Heart left ventricle (tissue), 16 donors: ENCODE measurements at regions of chr12 and their contacts with region 1.

Region 1: GRCh38 chr12:122752464-122753318 is at the start of gene DENR:
- DNase-seq: peak; percentile 97 to 99 (median 98)
- ATAC-seq: peak; percentile 97 to 99 (median 98)
- H3K4me3 ChIP-seq: peak within 1 kb of the TSS; percentile 65 to 99 (median 87)
- H3K27ac ChIP-seq: peak within 1 kb of the TSS; percentile 37 to 95 (median 83)
- H3K4me1 ChIP-seq: peaks cover 0 to 19% (median 8%) of the 10 kb centered on the region in 12 donors
- H3K27me3 ChIP-seq: no peaks in the 10 kb centered on the region
- CTCF ChIP-seq: peak; percentile 60 to 96 (median 84)
- POLR2A ChIP-seq: peak in 1 of 2 donors; percentile 89
- total RNA-seq, gene DENR: 13.3 to 32.7 (median 26.3) TPM

Region 2: DNA sequence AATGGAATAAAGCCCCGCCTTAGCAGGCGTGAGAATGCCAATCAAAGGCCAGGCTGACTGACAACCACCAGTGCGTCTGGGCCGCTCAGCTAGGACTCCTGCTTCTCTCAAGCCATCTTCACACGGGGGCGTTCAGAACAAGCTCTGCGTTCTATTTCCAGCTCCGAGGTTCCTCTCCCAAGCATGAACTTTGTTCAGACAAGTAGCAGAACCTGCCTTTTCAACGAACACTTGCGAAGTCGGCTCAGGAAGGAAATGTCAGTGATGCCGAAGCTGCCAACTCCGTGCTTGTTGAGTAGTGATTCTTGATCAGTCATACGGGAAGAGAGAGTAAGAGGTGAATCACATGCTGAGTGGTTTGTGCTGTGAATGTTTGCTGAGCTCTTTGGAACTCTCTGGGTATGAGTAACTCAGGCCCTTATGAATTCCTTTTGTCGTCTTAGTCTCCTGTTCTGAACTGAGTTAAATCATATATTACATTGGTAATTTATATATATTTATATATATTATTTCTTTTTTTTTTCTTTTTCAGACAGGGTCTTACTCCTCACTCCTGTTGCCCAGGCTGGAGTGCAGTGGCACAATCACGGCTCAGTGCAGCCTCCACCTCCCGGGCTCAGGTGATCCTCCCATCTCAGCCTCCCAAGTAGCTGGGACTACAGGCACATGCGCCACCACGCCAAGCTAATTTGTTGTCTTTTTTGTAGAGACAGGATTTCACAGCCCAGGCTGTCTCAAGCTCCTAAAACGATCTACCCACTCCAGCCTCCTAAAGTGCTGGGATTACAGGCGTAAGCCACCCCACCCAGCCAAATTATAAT is 760.4 kb before region 1 on chr12:
- intact Hi-C with region 1: no loop called
- DNase-seq: peak in 2 of 5 donors; percentile 56 to 63
- ATAC-seq: peak in 3 of 4 donors; percentile 56 to 81 (median 79)
- H3K4me3 ChIP-seq: no peak overlapping the region
- H3K27ac ChIP-seq: peak overlapping the region in 9 of 12 donors; percentile 1 to 73 (median 47)
- H3K4me1 ChIP-seq: peaks cover 0 to 15% (median 0%) of the 10 kb centered on the region in 12 donors
- H3K27me3 ChIP-seq: no peaks in the 10 kb centered on the region
- CTCF ChIP-seq: no peak
- POLR2A ChIP-seq: no peak

Region 3: DNA sequence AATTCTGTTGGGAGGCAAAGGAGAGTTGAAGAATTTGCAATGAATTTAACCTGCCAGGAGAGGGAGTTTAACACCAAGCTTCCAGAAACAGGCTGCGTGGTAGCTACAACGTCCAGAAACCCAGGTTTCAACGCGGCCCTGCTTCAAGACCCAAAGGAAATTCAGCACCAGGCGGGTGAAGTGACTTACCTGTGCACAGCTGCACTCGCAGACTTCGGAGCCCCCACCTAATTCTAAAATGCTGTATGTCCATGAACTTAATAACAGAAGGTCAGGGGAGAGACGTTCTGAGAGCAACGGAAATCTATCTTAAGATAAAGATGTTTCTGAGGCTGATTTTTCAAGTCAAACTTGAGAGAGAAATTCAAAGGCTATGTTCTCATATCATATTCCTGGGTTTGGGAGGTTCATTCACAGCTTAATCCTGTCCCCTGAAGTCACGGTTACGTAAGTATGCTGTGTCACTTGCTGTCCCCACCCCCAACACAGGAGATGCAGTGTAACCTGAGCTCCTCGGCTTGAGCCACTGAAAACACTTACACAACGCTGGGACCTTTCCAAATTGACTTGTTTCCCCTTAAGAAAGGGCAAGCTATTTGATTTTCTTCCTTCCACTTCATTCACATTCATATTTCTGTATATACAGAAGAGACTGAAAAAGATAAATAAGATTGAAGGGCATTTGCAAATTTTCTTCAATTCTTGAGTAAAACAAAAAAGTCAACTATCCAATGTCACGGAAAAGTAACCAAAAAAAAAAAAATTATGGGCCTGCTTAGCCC is 352.9 kb before region 1 on chr12:
- intact Hi-C with region 1: loop called in 2 of 10 experiments (anchors 2 to 5 kb)
- DNase-seq: peak in 4 of 5 donors; percentile 61 to 75 (median 66)
- ATAC-seq: peak; percentile 84 to 92 (median 86)
- H3K4me3 ChIP-seq: peak overlapping the region in 9 of 12 donors; percentile 3 to 43 (median 25)
- H3K27ac ChIP-seq: peak overlapping the region; percentile 69 to 93 (median 86)
- H3K4me1 ChIP-seq: peaks cover 0 to 64% (median 17%) of the 10 kb centered on the region in 12 donors
- H3K27me3 ChIP-seq: no peaks in the 10 kb centered on the region
- CTCF ChIP-seq: peak; percentile 47 to 75 (median 66)
- POLR2A ChIP-seq: no peak

Region 4: GRCh38 chr12:122526683-122527477 is 225.8 kb before region 1 on chr12 and contains the starts of genes KNTC1 and RSRC2:
- intact Hi-C with region 1: loop called in 4 of 10 experiments (anchors 1 to 10 kb)
- DNase-seq: peak; percentile 96 to 99 (median 99)
- ATAC-seq: peak; percentile 96 to 99 (median 98)
- H3K4me3 ChIP-seq: peak within 1 kb of the TSS; percentile 56 to 92 (median 78)
- H3K27ac ChIP-seq: peak within 1 kb of the TSS; percentile 91 to 100 (median 98)
- H3K4me1 ChIP-seq: peaks cover 12 to 47% (median 41%) of the 10 kb centered on the region in 12 donors
- H3K27me3 ChIP-seq: no peaks in the 10 kb centered on the region
- CTCF ChIP-seq: no peak
- POLR2A ChIP-seq: peak in 1 of 2 donors; percentile 82
- total RNA-seq, gene KNTC1: 2.2 to 10.4 (median 2.9) TPM
- total RNA-seq, gene RSRC2: 31.1 to 46.5 (median 35.4) TPM

Region 5: GRCh38 chr12:122635471-122635870 is 117.2 kb before region 1 on chr12:
- intact Hi-C with region 1: loop called (anchors 1 to 5 kb)
- DNase-seq: no peak
- ATAC-seq: no peak
- H3K4me3 ChIP-seq: no peak overlapping the region
- H3K27ac ChIP-seq: no peak overlapping the region
- H3K4me1 ChIP-seq: no peaks in the 10 kb centered on the region
- H3K27me3 ChIP-seq: no peaks in the 10 kb centered on the region
- CTCF ChIP-seq: no peak
- POLR2A ChIP-seq: no peak

Region 6: GRCh38 chr12:122803937-122804336 is 51.2 kb after region 1 on chr12:
- intact Hi-C with region 1: no loop called
- DNase-seq: no peak
- ATAC-seq: no peak
- H3K4me3 ChIP-seq: no peak overlapping the region
- H3K27ac ChIP-seq: no peak overlapping the region
- H3K4me1 ChIP-seq: no peaks in the 10 kb centered on the region
- H3K27me3 ChIP-seq: no peaks in the 10 kb centered on the region
- CTCF ChIP-seq: no peak
- POLR2A ChIP-seq: no peak